ENCODE measurements at regions of chrX and their contacts with region 1.

Region 1: DNA sequence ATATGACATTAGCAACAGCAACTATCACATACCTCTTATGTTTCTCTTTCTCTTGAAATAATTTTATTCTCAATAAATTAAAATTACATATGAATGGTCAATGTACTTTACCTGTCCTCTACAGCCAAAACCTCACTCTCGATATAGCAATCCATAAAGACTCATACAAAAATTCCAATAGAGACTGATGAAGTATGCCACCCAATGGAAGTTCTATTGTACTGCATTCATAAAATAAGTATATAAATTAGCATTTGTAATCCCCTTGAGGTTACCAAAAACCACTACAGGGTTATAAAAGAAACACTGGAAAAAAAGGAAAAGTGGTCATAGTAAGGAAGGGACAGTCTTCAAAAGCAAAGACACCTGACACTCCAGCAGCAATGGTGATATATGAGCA is 32.8 kb downstream of the CLDN2 start:
- DNase-seq: no peak
- H3K4me3 ChIP-seq: no peak overlapping the region
- H3K27ac ChIP-seq: no peak overlapping the region
- H3K4me1 ChIP-seq: no peaks in the 10 kb centered on the region
- H3K27me3 ChIP-seq: no peaks in the 10 kb centered on the region
- CTCF ChIP-seq: peak in 4 of 11 experiments; percentile 13 to 43 (median 25)
- POLR2A ChIP-seq: no peak

Region 2: DNA sequence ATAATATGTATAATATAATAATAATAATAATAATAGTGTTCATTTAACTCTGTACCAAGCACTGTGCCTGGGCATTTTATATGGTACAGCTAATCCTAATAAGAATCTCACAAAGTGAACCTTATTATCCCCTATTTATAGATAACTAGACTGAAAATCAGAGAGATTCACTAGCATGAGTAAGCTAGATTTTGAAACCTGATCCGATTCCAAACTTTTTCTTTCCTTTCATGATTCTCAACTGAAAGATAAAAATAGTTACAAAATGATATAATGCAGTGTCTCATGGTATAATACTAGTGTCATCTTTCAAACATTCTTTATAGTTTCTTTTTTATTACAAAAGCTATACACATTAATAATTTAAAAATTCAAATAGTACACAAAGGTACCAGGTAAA is 282.4 kb before region 1 on chrX:
- intact Hi-C with region 1: no loop called
- DNase-seq: no peak
- H3K4me3 ChIP-seq: no peak overlapping the region
- H3K27ac ChIP-seq: no peak overlapping the region
- H3K4me1 ChIP-seq: no peaks in the 10 kb centered on the region
- H3K27me3 ChIP-seq: no peaks in the 10 kb centered on the region
- CTCF ChIP-seq: no peak
- POLR2A ChIP-seq: no peak

Region 3: GRCh38 chrX:106894392-106894909 is 58.5 kb before region 1 on chrX:
- intact Hi-C with region 1: loop called (anchors 10 kb)
- DNase-seq: no peak
- H3K4me3 ChIP-seq: no peak overlapping the region
- H3K27ac ChIP-seq: no peak overlapping the region
- H3K4me1 ChIP-seq: no peaks in the 10 kb centered on the region
- H3K27me3 ChIP-seq: peaks cover 0 to 42% (median 0%) of the 10 kb centered on the region in 7 donors
- CTCF ChIP-seq: peak in 10 of 11 experiments; percentile 22 to 77 (median 73)
- POLR2A ChIP-seq: no peak

Region 4: DNA sequence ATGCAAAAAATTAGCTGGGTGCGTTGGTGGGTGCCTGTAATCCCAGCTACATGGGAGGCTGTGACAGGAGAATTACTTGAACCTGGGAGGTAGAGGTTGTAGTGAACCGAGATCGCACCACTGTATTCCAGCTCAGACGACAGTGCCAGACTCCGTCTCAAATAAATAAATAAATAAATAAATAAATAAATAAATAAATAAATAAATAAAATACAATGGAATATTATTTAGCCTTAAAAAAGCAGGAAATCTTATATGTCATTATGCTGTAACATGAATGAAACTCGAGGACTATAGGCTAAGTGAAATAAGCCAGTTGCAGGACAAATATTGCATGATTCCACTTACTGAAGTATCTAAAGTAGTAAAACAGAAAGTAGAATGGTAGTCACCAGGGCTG is 123.2 kb after region 1 on chrX:
- intact Hi-C with region 1: no loop called
- DNase-seq: no peak
- H3K4me3 ChIP-seq: no peak overlapping the region
- H3K27ac ChIP-seq: no peak overlapping the region
- H3K4me1 ChIP-seq: no peaks in the 10 kb centered on the region
- H3K27me3 ChIP-seq: no peaks in the 10 kb centered on the region
- CTCF ChIP-seq: no peak
- POLR2A ChIP-seq: no peak

Region 5: DNA sequence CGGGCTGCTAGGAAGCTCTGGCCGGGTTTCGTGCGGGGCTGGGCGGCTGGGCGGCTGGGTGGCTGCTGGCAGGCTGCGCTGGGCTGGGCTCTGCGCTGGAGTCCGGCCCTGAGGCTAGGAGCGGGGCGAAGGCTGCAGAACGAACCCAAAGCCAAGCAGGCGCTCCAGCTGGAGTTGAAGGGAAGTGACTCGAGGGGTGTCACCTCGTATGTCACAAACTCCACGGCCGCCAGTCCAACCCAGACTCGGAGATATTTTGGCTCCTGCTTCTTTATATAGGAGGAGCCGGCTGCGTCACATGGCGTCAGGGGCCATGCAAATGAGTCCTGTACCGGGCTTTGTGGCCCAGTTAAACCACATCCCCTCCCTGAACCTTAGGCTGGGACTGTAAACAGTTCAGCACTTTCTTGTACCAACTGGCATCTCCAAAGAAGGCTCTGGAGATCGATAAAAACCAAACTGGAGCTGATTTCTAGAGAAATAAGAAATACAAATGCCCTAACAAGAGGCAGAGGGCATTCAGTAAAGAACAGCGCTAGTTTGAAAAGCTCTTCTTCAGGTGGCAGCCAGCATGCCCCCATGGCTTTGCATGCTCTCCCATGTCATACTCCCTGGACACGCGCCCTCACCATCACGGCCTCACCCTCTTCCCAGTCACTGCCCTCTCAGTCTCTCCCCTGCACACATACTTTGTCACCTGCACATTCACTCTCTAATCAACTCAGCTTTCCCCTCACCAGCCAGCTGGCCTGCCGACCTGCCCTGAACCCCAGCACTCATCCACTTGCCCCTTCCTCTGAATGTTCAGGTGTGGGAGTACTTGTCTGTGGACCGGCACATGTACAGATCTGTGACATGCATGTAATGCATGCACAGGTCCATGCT is 764.1 kb after region 1 on chrX:
- intact Hi-C with region 1: no loop called
- DNase-seq: peak; percentile 95
- H3K4me3 ChIP-seq: peak overlapping the region; percentile 56 to 72 (median 62)
- H3K27ac ChIP-seq: peak overlapping the region; percentile 63 to 98 (median 92)
- H3K4me1 ChIP-seq: peaks cover under 1 to 81% (median 51%) of the 10 kb centered on the region in 6 donors
- H3K27me3 ChIP-seq: peaks cover 0 to 26% (median 0%) of the 10 kb centered on the region in 7 donors
- CTCF ChIP-seq: peak in 4 of 11 experiments; percentile 9 to 36 (median 15)
- POLR2A ChIP-seq: peak; percentile 96 to 99 (median 98)

Region 6: DNA sequence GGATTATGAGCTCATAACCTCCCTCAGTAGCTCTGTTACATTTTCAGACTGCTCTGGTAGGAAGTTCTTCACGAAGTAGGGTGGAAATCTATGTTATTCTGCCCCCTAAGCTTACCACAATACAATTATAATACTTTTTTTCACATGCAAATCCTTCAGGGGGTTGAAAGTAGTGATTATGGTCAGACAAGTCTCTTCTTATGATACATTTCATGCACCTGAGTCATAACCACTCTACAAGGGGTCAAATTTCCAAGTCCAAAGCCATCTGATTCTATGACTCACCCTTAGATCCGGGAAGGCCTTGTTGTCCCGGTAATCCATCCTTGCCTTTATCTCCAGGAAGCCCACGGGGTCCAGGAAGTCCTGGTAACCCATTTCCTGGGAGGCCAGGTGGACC is 1233.8 kb after region 1 on chrX:
- intact Hi-C with region 1: no loop called
- DNase-seq: no peak
- H3K4me3 ChIP-seq: no peak overlapping the region
- H3K27ac ChIP-seq: no peak overlapping the region
- H3K4me1 ChIP-seq: no peaks in the 10 kb centered on the region
- H3K27me3 ChIP-seq: no peaks in the 10 kb centered on the region
- CTCF ChIP-seq: no peak
- POLR2A ChIP-seq: no peak